CD8-positive, alpha-beta memory T cell (primary cell): ENCODE measurements at regions of chr7 and their contacts with region 1.

Region 1: GRCh38 chr7:74026903-74027551 is 946 bp upstream of the ELN start:
- DNase-seq: peak; percentile 18 to 69 (median 42)
- H3K4me3 ChIP-seq: no peak overlapping the region
- H3K4me3 Mint-ChIP-seq: peak overlapping the region in 1 of 7 donors; percentile 23
- H3K27ac ChIP-seq: no peak overlapping the region
- H3K27ac Mint-ChIP-seq: peak overlapping the region in 1 of 8 donors; percentile 60
- H3K4me1 ChIP-seq: peaks cover 4% of the 10 kb centered on the region
- H3K4me1 Mint-ChIP-seq: peaks cover 9 to 17% (median 12%) of the 10 kb centered on the region in 3 donors
- H3K27me3 ChIP-seq: peaks cover 26% of the 10 kb centered on the region
- H3K27me3 Mint-ChIP-seq: peaks cover 37 to 58% of the 10 kb centered on the region in 2 donors

Region 2: DNA sequence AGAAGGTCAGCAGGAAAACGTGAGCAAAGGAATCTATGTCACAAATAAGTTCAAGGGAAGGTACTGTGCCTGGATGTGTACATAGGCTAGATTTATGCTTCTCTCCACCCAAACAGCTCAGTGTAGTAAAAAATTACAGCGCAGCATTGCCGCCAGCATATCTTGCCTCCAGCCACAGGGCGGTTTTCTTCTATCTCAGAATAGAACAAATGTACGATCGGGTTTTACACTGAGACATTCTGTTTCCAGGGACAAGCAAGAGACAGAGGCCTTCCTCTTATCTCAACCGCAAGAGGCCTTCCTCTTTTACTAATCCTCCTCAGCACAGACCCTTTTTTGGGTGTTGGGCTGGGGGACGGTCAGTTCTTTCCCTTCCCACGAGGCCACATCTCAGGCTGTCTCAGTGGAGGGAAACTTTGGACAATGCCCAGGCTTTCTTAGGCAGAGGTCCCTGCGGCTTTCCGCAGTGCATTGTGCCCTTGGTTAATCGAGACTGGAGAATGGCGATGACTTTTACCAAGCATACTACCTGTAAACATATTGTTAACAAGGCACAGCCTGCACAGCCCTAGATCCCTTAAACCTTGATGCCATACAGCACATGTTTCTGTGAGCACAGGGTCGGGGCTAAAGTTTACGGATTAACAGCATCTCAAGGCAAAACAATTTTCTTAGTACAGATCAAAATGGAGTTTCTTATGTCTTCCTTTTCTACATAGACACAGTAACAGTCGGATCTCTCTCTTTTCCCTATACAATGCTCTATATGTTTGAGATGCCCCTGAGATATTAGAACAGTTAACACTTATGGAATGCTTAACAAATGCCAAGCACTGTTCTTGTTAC is 276.9 kb before region 1 on chr7:
- CTCF ChIA-PET with region 1: no interaction called
- POLR2A ChIA-PET with region 1: no interaction called
- DNase-seq: no peak
- H3K4me3 ChIP-seq: no peak overlapping the region
- H3K4me3 Mint-ChIP-seq: no peak overlapping the region
- H3K27ac ChIP-seq: no peak overlapping the region
- H3K27ac Mint-ChIP-seq: peak overlapping the region in 1 of 8 donors; percentile 23
- H3K4me1 ChIP-seq: no peaks in the 10 kb centered on the region
- H3K4me1 Mint-ChIP-seq: no peaks in the 10 kb centered on the region
- H3K27me3 ChIP-seq: no peaks in the 10 kb centered on the region
- H3K27me3 Mint-ChIP-seq: peaks cover 8 to 26% of the 10 kb centered on the region in 2 donors

Region 3: GRCh38 chr7:74038300-74038961 is 11.4 kb after region 1 on chr7:
- CTCF ChIA-PET with region 1: interaction called, 17 read pairs
- POLR2A ChIA-PET with region 1: no interaction called
- DNase-seq: no peak
- H3K4me3 ChIP-seq: no peak overlapping the region
- H3K4me3 Mint-ChIP-seq: no peak overlapping the region
- H3K27ac ChIP-seq: no peak overlapping the region
- H3K27ac Mint-ChIP-seq: peak overlapping the region in 1 of 8 donors; percentile 38
- H3K4me1 ChIP-seq: no peaks in the 10 kb centered on the region
- H3K4me1 Mint-ChIP-seq: no peaks in the 10 kb centered on the region
- H3K27me3 ChIP-seq: no peaks in the 10 kb centered on the region
- H3K27me3 Mint-ChIP-seq: peaks cover 2 to 17% of the 10 kb centered on the region in 2 donors

Region 4: DNA sequence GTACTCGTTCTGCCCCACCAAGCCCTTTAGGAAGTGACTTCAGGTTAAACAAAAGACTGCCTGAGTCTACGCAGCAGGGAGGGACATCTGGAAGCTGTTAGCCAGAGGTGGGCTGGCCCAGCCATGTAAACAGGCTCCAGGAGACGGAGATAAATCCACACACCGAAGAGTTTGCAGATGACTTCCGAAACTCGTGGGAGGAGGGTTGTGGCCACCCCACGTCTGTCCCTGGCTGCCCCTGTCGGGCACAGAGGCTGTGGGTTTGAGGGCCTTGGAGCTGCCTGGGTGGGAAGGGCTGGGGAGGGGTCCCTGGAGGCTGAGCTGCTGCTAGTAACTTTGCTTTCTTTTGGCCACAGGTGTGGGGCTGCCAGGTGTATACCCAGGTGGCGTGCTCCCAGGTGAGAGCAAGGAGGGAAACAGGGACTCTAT is 16.5 kb after region 1 on chr7:
- CTCF ChIA-PET with region 1: interaction called, 17 read pairs
- POLR2A ChIA-PET with region 1: no interaction called
- DNase-seq: no peak
- H3K4me3 ChIP-seq: no peak overlapping the region
- H3K4me3 Mint-ChIP-seq: no peak overlapping the region
- H3K27ac ChIP-seq: no peak overlapping the region
- H3K27ac Mint-ChIP-seq: no peak overlapping the region
- H3K4me1 ChIP-seq: no peaks in the 10 kb centered on the region
- H3K4me1 Mint-ChIP-seq: no peaks in the 10 kb centered on the region
- H3K27me3 ChIP-seq: no peaks in the 10 kb centered on the region
- H3K27me3 Mint-ChIP-seq: peaks cover 4 to 9% of the 10 kb centered on the region in 2 donors

Region 5: DNA sequence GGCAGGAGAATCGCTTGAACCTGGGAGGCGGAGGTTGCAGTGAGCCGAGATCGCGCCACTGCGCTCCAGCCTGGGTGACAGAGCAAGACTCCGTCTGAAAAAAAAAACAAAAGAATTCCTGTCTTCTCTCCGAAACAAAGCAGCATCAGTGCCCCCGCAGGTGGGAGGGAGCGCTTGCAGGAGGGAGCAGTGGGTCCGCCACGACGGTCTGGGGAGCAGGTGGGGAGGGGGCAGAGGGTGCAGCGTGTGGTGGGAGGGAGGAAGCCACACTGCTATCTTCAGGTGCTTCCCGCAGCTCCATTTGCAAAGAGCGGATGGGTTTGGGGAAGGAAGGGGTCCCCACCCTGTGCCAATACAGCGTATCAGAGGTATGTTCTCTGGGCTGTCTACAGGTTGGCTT is 88.3 kb after region 1 on chr7:
- CTCF ChIA-PET with region 1: no interaction called
- POLR2A ChIA-PET with region 1: no interaction called
- DNase-seq: no peak
- H3K4me3 ChIP-seq: no peak overlapping the region
- H3K4me3 Mint-ChIP-seq: no peak overlapping the region
- H3K27ac ChIP-seq: no peak overlapping the region
- H3K27ac Mint-ChIP-seq: peak overlapping the region in 1 of 8 donors; percentile 61
- H3K4me1 ChIP-seq: no peaks in the 10 kb centered on the region
- H3K4me1 Mint-ChIP-seq: no peaks in the 10 kb centered on the region
- H3K27me3 ChIP-seq: no peaks in the 10 kb centered on the region
- H3K27me3 Mint-ChIP-seq: no peaks in the 10 kb centered on the region